B cell (primary cell): ENCODE measurements at regions of chr1 and their contacts with region 1.

Region 1: DNA sequence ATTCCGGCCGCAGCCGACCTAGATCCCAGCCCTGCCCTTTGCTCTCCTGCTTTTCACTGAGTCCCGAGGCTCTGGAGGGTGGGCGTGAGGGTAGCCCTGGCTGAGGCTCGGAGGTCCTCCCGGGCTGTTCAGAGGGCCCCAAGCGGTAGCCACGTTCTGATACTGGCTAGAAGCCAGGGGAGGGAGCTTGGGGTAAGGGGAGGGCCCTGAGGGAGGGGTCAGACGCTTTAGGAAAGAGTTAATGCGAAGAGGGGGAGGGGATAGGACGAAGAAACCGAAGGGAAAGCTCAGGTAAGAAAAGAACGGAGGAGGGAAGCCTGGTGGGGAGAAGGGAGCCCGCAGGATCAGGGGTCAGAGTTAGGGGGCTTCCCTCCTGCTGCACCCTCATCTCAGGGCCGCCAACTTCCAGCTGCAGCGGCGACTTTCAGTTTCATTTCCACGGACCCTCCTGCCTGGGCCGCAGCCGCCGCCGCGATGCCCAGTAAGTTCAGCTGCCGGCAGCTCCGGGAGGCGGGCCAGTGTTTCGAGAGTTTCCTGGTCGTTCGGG is at the start of gene MOV10:
- DNase-seq: peak; percentile 76
- ATAC-seq: peak; percentile 63
- H3K4me3 ChIP-seq: peak within 1 kb of the TSS; percentile 42 to 86 (median 80)
- H3K4me3 Mint-ChIP-seq: peak within 1 kb of the TSS; percentile 94
- H3K27ac ChIP-seq: peak within 1 kb of the TSS; percentile 26 to 76
- H3K27ac Mint-ChIP-seq: peak within 1 kb of the TSS; percentile 92
- H3K4me1 ChIP-seq: peaks cover 25 to 30% of the 10 kb centered on the region in 2 donors
- H3K4me1 Mint-ChIP-seq: peaks cover 30% of the 10 kb centered on the region
- H3K27me3 ChIP-seq: no peaks in the 10 kb centered on the region
- H3K27me3 Mint-ChIP-seq: no peaks in the 10 kb centered on the region
- CTCF ChIP-seq: no peak
- total RNA-seq, gene MOV10: 46.2 and 51.2 TPM in 2 replicates

Region 2: DNA sequence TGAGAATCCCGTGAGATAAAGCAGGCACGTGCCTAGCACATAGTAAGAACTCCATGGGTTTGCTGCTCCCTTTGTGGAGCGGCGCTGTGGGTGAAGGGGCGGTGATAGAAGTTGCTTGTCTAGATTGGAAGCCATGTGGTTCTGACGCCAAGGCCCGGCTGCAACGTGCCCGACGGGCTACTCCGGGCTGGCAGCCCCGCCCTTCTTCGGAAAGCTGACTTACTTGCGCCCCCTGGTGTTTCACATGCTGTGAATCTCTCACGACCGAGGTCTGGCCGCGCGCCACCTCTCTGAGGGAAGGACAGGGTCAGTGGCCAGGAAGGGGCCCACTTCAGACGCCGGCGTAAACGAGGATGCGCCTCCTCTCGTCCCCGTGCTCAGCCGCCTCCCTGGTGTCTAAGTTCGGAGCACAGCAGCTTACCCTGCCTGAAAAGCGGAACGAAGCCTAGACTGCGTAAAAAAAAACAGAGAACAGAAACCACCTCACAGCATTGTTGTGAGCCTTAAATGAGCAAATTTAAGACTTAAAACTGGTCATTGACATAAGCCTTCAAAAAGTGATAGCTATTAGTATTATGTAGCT is 208.3 kb before region 1 on chr1:
- CTCF ChIA-PET with region 1: interaction called, 12 read pairs
- POLR2A ChIA-PET with region 1: no interaction called
- intact Hi-C with region 1: loop called (anchors 10 kb)
- DNase-seq: peak; percentile 94
- ATAC-seq: peak; percentile 97
- H3K4me3 ChIP-seq: peak overlapping the region; percentile 5 to 51 (median 50)
- H3K4me3 Mint-ChIP-seq: peak overlapping the region; percentile 83
- H3K27ac ChIP-seq: peak overlapping the region; percentile 74 to 75
- H3K27ac Mint-ChIP-seq: peak overlapping the region; percentile 83
- H3K4me1 ChIP-seq: peaks cover 27 to 40% of the 10 kb centered on the region in 2 donors
- H3K4me1 Mint-ChIP-seq: peaks cover 46% of the 10 kb centered on the region
- H3K27me3 ChIP-seq: peaks cover 0 to 21% (median 12%) of the 10 kb centered on the region in 4 experiments
- H3K27me3 Mint-ChIP-seq: peaks cover 19% of the 10 kb centered on the region
- CTCF ChIP-seq: peak; percentile 75

Region 3: GRCh38 chr1:112700290-112701226 is 26.0 kb after region 1 on chr1:
- CTCF ChIA-PET with region 1: interaction called, 5 read pairs
- POLR2A ChIA-PET with region 1: interaction called, 6 read pairs
- intact Hi-C with region 1: loop called (anchors 2 kb)
- DNase-seq: peak; percentile 77
- ATAC-seq: peak; percentile 79
- H3K4me3 ChIP-seq: peak overlapping the region in 1 of 5 experiments; percentile 28
- H3K4me3 Mint-ChIP-seq: peak overlapping the region; percentile 77
- H3K27ac ChIP-seq: peak overlapping the region; percentile 79 to 86
- H3K27ac Mint-ChIP-seq: peak overlapping the region; percentile 96
- H3K4me1 ChIP-seq: peaks cover 49 to 59% of the 10 kb centered on the region in 2 donors
- H3K4me1 Mint-ChIP-seq: peaks cover 63% of the 10 kb centered on the region
- H3K27me3 ChIP-seq: no peaks in the 10 kb centered on the region
- H3K27me3 Mint-ChIP-seq: no peaks in the 10 kb centered on the region
- CTCF ChIP-seq: no peak

Region 4: GRCh38 chr1:112706908-112707663 is 32.6 kb after region 1 on chr1 and contains the start of gene RHOC:
- CTCF ChIA-PET with region 1: interaction called, 62 read pairs
- POLR2A ChIA-PET with region 1: interaction called, 6 read pairs
- intact Hi-C with region 1: no loop called
- DNase-seq: peak; percentile 81
- ATAC-seq: peak; percentile 85
- H3K4me3 ChIP-seq: peak within 1 kb of the TSS in 4 of 5 experiments; percentile 56 to 74 (median 66)
- H3K4me3 Mint-ChIP-seq: peak within 1 kb of the TSS; percentile 88
- H3K27ac ChIP-seq: peak within 1 kb of the TSS in 1 of 2 donors; percentile 49
- H3K27ac Mint-ChIP-seq: peak within 1 kb of the TSS; percentile 81
- H3K4me1 ChIP-seq: peaks cover 34 to 46% of the 10 kb centered on the region in 2 donors
- H3K4me1 Mint-ChIP-seq: peaks cover 50% of the 10 kb centered on the region
- H3K27me3 ChIP-seq: no peaks in the 10 kb centered on the region
- H3K27me3 Mint-ChIP-seq: no peaks in the 10 kb centered on the region
- CTCF ChIP-seq: peak; percentile 72
- total RNA-seq, gene RHOC: 18.5 and 21.0 TPM in 2 replicates